Activated B cell treated with CpG ODN at 0.5 μM for 24 hours (primary cell): ENCODE measurements at regions of chr17 and their contacts with region 1.

Region 1: DNA sequence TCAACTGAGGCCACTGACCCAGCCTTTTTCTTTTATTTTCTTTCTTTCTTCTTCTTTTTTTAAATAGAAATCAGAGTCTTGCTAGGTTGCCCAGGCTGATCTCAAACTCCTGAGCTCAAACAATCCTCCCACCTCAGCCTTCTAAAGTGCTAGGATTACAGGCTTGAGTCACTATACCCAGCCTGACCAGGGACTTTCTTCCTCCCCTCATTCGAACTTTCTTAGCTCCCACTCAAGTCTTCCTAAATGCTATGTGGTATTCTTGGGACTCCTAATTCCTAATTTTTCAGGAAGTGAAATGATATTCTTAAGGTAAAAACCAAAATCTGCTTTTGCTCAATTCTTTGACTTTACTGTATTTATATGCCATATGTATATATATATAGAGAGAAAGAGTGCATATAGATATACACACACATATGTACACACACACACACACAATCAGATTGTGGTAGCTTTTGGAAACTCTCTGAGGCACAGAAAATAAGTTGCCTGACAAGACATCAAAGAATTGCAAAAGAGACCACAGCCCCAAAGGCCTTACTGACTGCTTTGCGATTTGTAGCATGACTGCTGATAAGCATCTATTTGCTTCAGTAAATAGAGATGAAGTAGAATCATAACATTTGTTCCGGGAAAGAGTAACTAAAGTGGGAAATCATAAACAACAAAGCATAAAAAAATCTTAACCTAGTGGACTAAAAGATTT is 9.5 kb upstream of the AMZ2 start:
- DNase-seq: no peak
- ATAC-seq: no peak
- H3K4me3 Mint-ChIP-seq: peak overlapping the region; percentile 79
- H3K27ac Mint-ChIP-seq: peak overlapping the region; percentile 99
- H3K4me1 Mint-ChIP-seq: peaks cover 72% of the 10 kb centered on the region
- H3K27me3 Mint-ChIP-seq: no peaks in the 10 kb centered on the region
- CTCF ChIP-seq: no peak

Region 2: GRCh38 chr17:68196944-68197595 is 41.2 kb before region 1 on chr17:
- CTCF ChIA-PET with region 1: interaction called, 14 read pairs
- POLR2A ChIA-PET with region 1: interaction called, 18 read pairs
- intact Hi-C with region 1: no loop called
- DNase-seq: peak; percentile 53
- ATAC-seq: peak; percentile 32
- H3K4me3 Mint-ChIP-seq: peak overlapping the region; percentile 78
- H3K27ac Mint-ChIP-seq: no peak overlapping the region
- H3K4me1 Mint-ChIP-seq: peaks cover 44% of the 10 kb centered on the region
- H3K27me3 Mint-ChIP-seq: peaks cover 10% of the 10 kb centered on the region
- CTCF ChIP-seq: no peak

Region 3: GRCh38 chr17:69207151-69207550 is 968.8 kb after region 1 on chr17:
- CTCF ChIA-PET with region 1: no interaction called
- POLR2A ChIA-PET with region 1: no interaction called
- intact Hi-C with region 1: no loop called
- DNase-seq: no peak
- ATAC-seq: no peak
- H3K4me3 Mint-ChIP-seq: no peak overlapping the region
- H3K27ac Mint-ChIP-seq: no peak overlapping the region
- H3K4me1 Mint-ChIP-seq: no peaks in the 10 kb centered on the region
- H3K27me3 Mint-ChIP-seq: no peaks in the 10 kb centered on the region
- CTCF ChIP-seq: no peak